ENCODE measurements at regions of chr11 and their contacts with region 1.

Region 1: GRCh38 chr11:22337596-22338485 is at the start of gene SLC17A6:
- DNase-seq: peak; percentile 73
- H3K4me3 Mint-ChIP-seq: no peak within 1 kb of the TSS
- H3K27ac Mint-ChIP-seq: no peak within 1 kb of the TSS
- H3K4me1 Mint-ChIP-seq: no peaks in the 10 kb centered on the region
- H3K27me3 Mint-ChIP-seq: peaks cover 55% of the 10 kb centered on the region
- total RNA-seq, gene SLC17A6: not detected in 2 replicates

Region 2: GRCh38 chr11:22037505-22037904 is 300.3 kb before region 1 on chr11:
- intact Hi-C with region 1: no loop called
- DNase-seq: no peak
- H3K4me3 Mint-ChIP-seq: no peak overlapping the region
- H3K27ac Mint-ChIP-seq: no peak overlapping the region
- H3K4me1 Mint-ChIP-seq: no peaks in the 10 kb centered on the region
- H3K27me3 Mint-ChIP-seq: no peaks in the 10 kb centered on the region

Region 3: GRCh38 chr11:22787551-22788162 is 449.8 kb after region 1 on chr11:
- intact Hi-C with region 1: loop called (anchors 1 kb)
- DNase-seq: peak; percentile 78
- H3K4me3 Mint-ChIP-seq: no peak overlapping the region
- H3K27ac Mint-ChIP-seq: no peak overlapping the region
- H3K4me1 Mint-ChIP-seq: no peaks in the 10 kb centered on the region
- H3K27me3 Mint-ChIP-seq: peaks cover 2% of the 10 kb centered on the region

Measured in activated CD4-positive, alpha-beta T cell treated with anti-CD3 and anti-CD28 coated beads, Interleukin-2, amount 10 ng/mL, durations not matched to agents 24 days and 14 days (primary cell).